ENCODE measurements at regions of chr7 and their contacts with region 1.

Region 1: DNA sequence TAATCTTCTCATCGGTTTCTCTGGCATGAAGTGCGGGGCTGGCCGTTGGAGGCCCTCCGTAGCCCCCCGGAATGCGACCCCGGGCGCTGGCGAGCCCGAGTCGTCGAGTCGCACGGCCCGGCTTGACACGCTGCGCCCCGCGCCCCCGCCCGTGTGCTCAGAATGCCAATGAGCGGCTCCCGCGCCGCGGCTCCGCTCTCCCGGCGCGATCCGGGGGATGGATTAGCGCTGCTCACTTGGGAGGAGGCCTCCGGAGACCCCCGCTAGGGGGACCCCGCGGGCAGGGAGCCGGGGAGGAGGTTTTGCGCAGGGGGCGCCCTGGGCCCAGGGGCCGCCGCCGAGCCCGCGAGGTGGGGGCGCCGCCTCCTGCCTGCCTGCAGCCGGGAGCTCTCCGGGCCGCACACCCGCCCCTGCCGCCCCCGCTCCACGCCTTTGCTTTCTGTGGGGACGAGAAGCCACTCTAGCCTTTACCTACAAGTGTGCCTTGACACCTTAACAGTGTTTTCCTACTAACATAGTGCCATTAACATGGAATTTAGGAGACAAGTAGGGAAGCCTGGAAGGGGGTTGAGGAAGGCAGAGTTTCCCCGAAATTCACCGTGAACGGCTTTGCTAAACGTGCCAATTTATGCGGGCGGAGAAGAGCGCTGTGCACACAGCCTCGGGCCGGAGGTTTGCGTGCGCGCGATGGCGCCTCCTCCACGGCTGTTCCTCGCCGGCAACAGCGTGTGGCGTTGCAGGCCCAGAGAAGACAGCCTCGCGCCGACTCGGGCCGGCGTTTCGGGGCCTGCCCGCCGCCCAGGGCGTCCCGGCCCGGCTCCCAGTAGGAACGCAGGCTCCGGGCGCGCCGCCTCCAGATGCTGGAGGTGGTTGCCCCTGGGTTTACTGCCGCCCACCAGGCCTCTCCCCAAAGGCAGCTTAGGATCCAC is 7.1 kb downstream of the SHH start:
- DNase-seq: peak; percentile 57 to 71 (median 57)
- ATAC-seq: peak; percentile 12
- H3K4me3 ChIP-seq: no peak overlapping the region
- H3K4me1 ChIP-seq: peaks cover 26% of the 10 kb centered on the region
- CTCF ChIP-seq: peak; percentile 19

Region 2: GRCh38 chr7:156827587-156828203 is 1022.5 kb after region 1 on chr7:
- intact Hi-C with region 1: loop called in 1 of 2 experiments (anchors 10 kb)
- DNase-seq: no peak
- ATAC-seq: no peak
- H3K4me3 ChIP-seq: no peak overlapping the region
- H3K4me1 ChIP-seq: no peaks in the 10 kb centered on the region
- CTCF ChIP-seq: no peak

Measured in mucosa of descending colon (tissue), 3 donors.